Astrocyte of the cerebellum (primary cell): ENCODE measurements at regions of chr6 and their contacts with region 1.

Region 1: DNA sequence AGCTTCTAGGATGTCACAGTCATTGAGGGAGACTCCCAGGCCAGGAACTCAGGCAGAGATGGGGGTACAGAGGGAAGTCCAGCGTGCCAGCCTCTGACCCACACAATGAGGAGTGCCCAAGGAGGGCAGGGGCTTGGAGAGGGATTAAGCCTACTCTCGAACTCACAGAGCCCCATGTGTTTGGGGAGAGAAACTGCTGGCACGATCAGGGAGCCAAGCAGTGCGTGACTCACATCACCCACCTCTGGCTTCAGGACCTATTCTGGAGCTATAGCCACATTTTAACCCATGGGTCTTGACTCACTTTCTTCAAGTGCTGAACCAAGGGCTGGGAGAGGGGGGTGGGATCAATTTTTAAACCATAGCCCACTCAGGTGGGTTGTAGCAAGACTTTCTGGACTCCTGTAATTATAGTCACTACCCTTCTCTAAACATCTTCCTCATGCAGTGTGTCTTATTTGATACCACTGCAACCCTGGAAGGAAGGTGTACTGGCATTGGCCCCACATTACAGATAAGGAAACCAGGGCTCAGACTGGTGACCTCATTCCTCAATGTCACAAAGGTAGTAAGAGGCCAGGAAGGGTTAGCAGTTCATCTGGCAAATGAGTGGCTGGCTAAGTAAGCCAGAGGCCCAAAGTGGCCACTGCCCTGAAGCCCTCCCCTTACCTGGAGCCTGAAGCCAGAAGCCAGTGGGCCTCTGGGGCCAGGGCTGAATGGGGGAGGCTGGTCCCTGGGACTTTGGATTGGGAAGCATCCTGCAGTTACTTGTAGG is 12.0 kb downstream of the FOXP4 start:
- DNase-seq: no peak
- H3K4me3 ChIP-seq: no peak overlapping the region
- CTCF ChIP-seq: no peak

Region 2: DNA sequence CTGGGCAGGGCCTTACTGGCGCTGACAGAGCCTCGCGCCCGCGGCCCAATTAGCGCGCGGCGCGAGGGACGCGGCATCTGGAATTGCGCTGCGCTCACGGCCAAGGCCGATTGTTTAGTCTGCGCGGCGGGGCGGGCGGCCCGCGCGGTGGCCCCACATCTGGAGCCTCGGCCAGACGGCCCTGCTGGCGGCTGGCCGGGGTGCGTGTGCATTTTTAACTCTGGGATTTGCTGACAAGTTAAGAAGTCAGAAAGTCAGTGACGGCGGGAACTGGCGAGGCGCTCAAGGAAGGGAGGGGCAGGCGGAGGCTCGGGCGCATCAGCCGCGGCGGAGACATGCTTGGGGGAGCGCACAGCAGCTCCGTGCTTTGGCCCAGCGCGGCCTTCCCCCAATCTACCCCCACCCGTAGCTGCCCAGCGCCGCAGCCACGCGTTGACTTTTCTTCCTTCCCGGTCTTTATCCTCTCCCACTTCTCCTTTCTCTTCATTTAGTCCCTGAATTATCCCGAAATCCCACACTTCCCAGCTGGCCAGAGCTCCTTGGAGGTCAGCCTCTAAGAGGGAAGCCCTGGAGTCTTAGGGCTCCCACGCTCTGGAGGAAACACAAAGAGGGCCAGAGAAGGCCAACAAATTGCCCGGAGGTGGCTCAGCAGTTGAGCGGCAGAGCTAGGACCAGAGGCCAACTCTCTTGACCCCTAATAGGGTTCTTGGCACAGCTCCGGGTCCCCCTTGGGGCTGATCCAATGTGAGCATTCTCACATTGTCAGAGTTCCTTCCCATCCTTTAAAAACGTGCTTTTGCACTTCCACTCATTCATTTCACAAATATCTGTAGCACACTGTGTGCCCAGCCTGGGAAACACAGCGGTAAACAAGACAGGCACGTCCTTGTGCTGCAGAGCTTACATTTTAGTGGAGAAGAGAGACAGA is 52.8 kb before region 1 on chr6:
- in situ Hi-C with region 1: no loop called
- DNase-seq: no peak
- H3K4me3 ChIP-seq: peak overlapping the region; percentile 1
- CTCF ChIP-seq: no peak

Region 3: GRCh38 chr6:41602864-41603608 is 44.8 kb after region 1 on chr6:
- in situ Hi-C with region 1: loop called (anchors 5 kb)
- DNase-seq: peak; percentile 80
- H3K4me3 ChIP-seq: no peak overlapping the region
- CTCF ChIP-seq: peak; percentile 93